ENCODE measurements at regions of chr19 and their contacts with region 1.

Region 1: GRCh38 chr19:44212250-44212865 is at the start of gene ZNF227:
- DNase-seq: peak; percentile 92
- H3K4me3 ChIP-seq: peak within 1 kb of the TSS; percentile 88
- H3K27ac ChIP-seq: peak within 1 kb of the TSS; percentile 69
- H3K27me3 ChIP-seq: no peaks in the 10 kb centered on the region
- CTCF ChIP-seq: no peak
- polyA plus RNA-seq, gene ZNF227: 9.9 and 11.8 TPM in 2 replicates

Region 2: DNA sequence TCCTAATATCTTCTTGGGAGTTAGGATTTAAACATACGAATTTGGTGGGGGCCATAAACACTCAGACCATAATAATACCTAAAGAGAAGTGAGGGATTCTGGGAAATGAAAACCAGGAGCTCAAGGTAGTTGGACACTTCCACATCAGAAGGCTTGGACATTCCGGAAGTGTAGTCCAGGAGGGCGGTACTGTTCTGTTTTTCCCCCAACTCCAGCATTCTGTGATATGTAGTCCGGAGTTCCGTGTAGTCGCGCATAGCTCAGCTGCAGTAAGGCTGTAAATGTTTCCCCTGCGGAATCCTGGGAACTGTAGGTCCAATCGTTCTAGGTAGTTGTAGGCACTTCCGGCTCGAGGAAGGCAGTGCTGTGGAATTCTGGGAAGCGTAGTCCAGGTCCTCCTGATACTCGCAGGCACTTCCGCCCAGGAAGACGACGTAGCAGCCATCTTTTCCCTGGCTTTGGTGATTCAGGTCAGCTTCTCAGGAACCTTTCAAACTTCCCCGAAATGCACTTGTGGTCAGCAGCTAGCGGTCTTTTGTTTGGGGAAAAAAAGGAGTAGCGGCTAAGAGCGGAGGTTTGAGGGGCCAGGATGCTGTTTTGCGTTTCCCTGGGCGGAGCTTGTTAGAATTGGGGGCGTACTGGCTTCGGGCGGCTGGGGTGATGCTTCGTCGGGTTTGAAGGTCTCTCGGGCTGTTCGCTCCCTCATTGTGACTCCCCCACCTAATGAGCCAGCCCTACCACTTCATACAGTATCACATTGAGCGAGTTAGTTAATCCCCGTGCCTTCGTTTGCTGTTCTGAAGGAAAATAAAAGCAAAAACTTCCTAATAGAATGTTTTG is 47.5 kb before region 1 on chr19 and contains the start of gene ZNF226:
- CTCF ChIA-PET with region 1: no interaction called
- POLR2A ChIA-PET with region 1: interaction called, 14 read pairs
- DNase-seq: peak; percentile 97
- H3K4me3 ChIP-seq: peak within 1 kb of the TSS; percentile 77
- H3K27ac ChIP-seq: peak within 1 kb of the TSS; percentile 92
- H3K27me3 ChIP-seq: no peaks in the 10 kb centered on the region
- CTCF ChIP-seq: no peak
- polyA plus RNA-seq, gene ZNF226: 30.5 and 36.1 TPM in 2 replicates

Region 3: DNA sequence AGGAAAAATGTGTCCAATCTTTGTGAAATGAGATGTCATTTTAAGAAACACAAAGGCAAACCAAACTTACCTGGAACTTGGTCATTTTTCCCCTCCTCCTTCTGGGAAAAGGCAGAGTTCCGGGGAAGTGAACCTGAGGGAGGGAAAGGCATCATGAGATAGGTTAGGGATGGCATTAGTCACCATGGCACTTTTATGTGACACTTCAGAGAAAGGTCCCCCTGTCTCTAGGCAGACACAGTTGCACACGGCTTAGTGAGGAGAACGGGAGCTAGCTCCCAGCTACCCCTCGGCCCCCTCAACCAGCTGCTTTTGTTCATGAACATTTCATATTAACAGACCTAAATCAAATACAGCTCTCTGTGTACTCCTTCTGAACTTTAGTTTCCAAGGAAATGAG is 91.0 kb after region 1 on chr19:
- CTCF ChIA-PET with region 1: no interaction called
- POLR2A ChIA-PET with region 1: interaction called, 12 read pairs
- DNase-seq: no peak
- H3K4me3 ChIP-seq: peak overlapping the region; percentile 97
- H3K27ac ChIP-seq: no peak overlapping the region
- H3K27me3 ChIP-seq: no peaks in the 10 kb centered on the region
- CTCF ChIP-seq: no peak